Activated naive CD4-positive, alpha-beta T cell treated with anti-CD3 and anti-CD28 coated beads for 36 hours (primary cell): ENCODE measurements at regions of chr11 and their contacts with region 1.

Region 1: DNA sequence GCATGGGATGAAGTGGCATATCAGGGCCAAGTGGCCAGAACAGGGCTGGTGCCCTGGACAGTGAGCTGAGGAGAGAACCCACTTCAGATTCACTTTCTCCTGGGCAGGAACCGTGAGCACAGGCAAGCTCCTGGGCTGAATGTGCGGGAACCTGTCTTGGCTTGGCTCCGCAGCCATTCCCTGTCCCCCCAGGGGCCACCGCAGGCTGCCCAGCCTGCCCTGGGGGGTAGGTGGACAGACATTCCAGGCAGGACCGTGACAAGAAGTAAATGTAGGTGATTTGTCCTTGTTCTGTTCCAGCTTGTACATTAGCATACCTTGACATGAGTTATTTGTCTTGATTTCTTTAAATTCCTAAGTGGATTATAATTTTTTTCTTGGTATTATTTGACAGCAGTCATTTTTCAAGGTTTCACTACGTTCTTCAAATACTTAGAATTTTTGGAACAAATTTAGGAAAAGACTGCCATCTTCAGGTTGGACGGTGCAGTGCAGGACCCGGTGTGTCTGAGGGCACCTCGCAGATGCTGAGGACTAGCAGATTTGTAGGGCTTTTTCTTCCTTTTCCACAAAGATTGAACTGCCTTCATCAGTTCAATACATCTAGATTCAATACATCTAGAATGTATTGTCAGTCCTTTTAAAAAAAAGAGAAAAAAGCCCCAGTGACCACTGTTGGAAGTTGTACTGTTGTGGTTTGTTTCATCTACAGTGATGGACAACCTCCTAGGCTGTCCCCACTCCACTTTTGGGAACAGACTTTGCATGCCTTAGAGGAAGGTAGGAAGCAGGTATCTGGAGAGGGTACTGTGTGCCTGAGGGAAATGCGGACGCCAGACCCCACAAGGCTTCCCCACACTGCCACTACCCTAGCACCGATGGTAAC is 115.1 kb upstream of the RASSF10 start:
- DNase-seq: peak; percentile 78
- H3K4me3 Mint-ChIP-seq: no peak overlapping the region
- H3K27ac Mint-ChIP-seq: no peak overlapping the region
- H3K4me1 Mint-ChIP-seq: no peaks in the 10 kb centered on the region
- H3K27me3 Mint-ChIP-seq: peaks cover 6% of the 10 kb centered on the region

Region 2: GRCh38 chr11:12052676-12053605 is 841.1 kb before region 1 on chr11:
- CTCF ChIA-PET with region 1: no interaction called
- intact Hi-C with region 1: loop called (anchors 5 kb)
- DNase-seq: peak; percentile 52
- H3K4me3 Mint-ChIP-seq: no peak overlapping the region
- H3K27ac Mint-ChIP-seq: no peak overlapping the region
- H3K4me1 Mint-ChIP-seq: no peaks in the 10 kb centered on the region
- H3K27me3 Mint-ChIP-seq: no peaks in the 10 kb centered on the region

Region 3: GRCh38 chr11:12922980-12923507 is 29.0 kb after region 1 on chr11:
- CTCF ChIA-PET with region 1: no interaction called
- intact Hi-C with region 1: no loop called
- DNase-seq: no peak
- H3K4me3 Mint-ChIP-seq: no peak overlapping the region
- H3K27ac Mint-ChIP-seq: no peak overlapping the region
- H3K4me1 Mint-ChIP-seq: no peaks in the 10 kb centered on the region
- H3K27me3 Mint-ChIP-seq: peaks cover 4% of the 10 kb centered on the region

Region 4: GRCh38 chr11:13030857-13031256 is 136.8 kb after region 1 on chr11:
- CTCF ChIA-PET with region 1: no interaction called
- intact Hi-C with region 1: no loop called
- DNase-seq: no peak
- H3K4me3 Mint-ChIP-seq: no peak overlapping the region
- H3K27ac Mint-ChIP-seq: no peak overlapping the region
- H3K4me1 Mint-ChIP-seq: no peaks in the 10 kb centered on the region
- H3K27me3 Mint-ChIP-seq: peaks cover 15% of the 10 kb centered on the region